ENCODE measurements at regions of chr10 and their contacts with region 1.

Region 1: DNA sequence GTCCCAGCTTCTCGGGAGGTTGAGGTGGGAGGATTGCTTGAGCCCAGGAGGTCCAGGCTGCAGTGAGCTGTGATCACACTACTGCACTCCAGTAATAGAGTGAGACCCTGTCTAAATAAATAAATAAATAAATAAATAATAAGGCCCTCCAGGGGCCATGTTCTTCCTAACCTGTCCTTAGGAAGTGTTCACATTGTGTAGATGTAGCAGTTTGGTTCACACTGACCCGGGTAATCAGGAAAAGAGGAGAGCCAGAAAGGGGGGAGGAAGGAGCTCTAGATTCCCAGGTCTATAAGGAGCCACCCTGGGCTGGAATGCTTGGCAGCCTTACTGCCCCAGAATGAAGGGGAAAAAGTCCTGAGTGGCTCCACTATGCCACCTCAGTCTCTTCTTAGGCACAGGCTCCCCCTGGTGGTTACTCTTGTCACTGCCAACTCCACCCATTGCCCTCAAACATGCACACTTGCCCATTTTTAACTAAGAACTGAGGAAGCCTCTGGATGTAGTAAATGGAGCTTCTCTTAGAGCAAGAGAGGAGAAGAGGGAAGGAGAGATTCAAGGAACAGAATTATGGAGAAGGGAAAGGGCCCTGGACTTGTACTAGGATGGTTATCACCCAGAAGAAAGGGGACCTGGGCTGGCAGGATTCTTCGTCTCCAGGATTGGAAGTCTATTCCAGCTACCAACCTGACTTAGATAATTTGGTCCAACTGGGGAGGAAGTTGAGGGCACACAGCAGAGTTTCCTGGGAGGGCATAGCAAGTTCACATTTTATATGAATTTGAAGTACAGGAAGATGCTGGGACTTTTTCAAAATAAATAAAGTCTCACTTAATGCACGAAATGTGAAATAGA is 7.8 kb downstream of the HPS6 start:
- DNase-seq: peak; percentile 77 to 83
- ATAC-seq: peak; percentile 88 to 94 (median 90)
- H3K4me3 ChIP-seq: no peak overlapping the region
- H3K27ac ChIP-seq: no peak overlapping the region
- H3K4me1 ChIP-seq: peaks cover 3% of the 10 kb centered on the region
- H3K27me3 ChIP-seq: no peaks in the 10 kb centered on the region
- CTCF ChIP-seq: peak; percentile 92

Region 2: GRCh38 chr10:101840741-101841453 is 232.0 kb before region 1 on chr10:
- intact Hi-C with region 1: loop called (anchors 2 to 5 kb)
- DNase-seq: peak; percentile 81 to 87
- ATAC-seq: peak; percentile 86 to 92 (median 87)
- H3K4me3 ChIP-seq: peak overlapping the region; percentile 53
- H3K27ac ChIP-seq: no peak overlapping the region
- H3K4me1 ChIP-seq: peaks cover 24% of the 10 kb centered on the region
- H3K27me3 ChIP-seq: no peaks in the 10 kb centered on the region
- CTCF ChIP-seq: peak; percentile 86

Region 3: DNA sequence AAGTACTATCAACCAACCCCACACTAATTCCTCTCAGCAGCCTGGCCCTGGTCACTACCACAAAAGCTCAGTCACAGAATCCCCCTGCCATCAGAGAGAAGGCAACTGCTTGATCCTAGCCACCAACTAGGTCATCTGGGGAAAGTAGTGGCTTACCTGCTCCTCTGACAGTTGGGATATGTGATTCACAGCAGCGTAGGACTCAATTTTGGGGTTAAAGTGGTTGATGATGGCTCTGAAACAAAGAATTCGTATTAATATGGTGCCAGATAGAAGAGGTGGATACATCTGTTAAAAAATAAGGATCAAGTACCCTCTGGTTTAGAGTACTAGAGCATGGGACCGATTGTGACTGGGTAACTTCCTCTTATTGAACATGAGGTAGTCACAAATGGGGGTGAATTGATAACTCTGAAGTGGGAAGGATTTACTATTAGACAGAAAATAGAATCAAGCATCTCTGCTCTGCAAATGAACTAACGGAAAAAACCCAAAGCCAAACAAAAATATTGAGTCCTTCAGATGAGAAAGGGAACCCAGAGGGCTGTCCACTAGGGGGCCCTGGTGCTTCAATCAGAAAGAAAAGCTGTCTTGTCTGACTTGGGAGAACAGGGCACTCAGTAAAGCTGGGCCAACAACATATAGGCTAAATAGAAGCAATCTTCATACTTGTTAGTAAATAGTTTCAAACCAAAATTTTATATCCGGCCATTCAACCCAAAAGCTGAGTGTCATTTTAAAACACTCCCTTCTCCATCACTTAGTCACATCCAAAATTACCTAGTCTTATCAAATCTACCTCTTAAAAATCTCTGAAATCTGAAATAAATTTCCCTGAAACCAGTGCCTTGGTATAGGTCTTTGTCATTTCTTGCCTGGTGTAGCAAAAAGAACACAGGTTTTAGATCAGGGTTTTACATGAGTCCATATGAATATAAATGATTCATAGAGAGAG is 183.4 kb before region 1 on chr10:
- intact Hi-C with region 1: loop called in 1 of 2 experiments (anchors 10 kb)
- DNase-seq: peak; percentile 67 to 79
- ATAC-seq: peak; percentile 58 to 85 (median 78)
- H3K4me3 ChIP-seq: no peak overlapping the region
- H3K27ac ChIP-seq: no peak overlapping the region
- H3K4me1 ChIP-seq: peaks cover 9% of the 10 kb centered on the region
- H3K27me3 ChIP-seq: no peaks in the 10 kb centered on the region
- CTCF ChIP-seq: peak; percentile 75

Region 4: GRCh38 chr10:102009801-102010425 is 63.0 kb before region 1 on chr10:
- intact Hi-C with region 1: loop called in 1 of 2 experiments (anchors 5 kb)
- DNase-seq: no peak
- ATAC-seq: peak; percentile 97 to 99 (median 98)
- H3K4me3 ChIP-seq: no peak overlapping the region
- H3K27ac ChIP-seq: no peak overlapping the region
- H3K4me1 ChIP-seq: peaks cover 5% of the 10 kb centered on the region
- H3K27me3 ChIP-seq: no peaks in the 10 kb centered on the region
- CTCF ChIP-seq: peak; percentile 91

Region 5: DNA sequence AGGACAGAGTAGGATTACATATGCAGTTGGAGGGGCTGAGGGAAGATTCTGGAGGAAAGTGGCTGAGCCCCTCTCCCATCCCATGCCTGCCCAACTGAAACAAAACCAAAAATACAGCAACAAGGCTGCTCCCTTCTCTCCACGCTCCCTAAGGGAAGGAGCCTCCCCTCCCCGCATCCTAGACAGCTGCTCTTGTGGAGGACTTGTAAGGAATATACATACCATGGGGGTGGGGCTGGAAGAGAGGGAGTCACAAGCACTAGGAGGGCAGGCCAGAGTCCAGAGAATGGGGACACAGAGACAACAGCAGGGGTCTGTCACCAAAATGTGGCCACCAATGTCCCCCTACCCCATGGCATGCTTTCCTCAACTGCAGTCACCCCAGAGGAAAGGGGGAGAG is 34.1 kb after region 1 on chr10:
- intact Hi-C with region 1: loop called in 1 of 2 experiments (anchors 5 kb)
- DNase-seq: no peak
- ATAC-seq: no peak
- H3K4me3 ChIP-seq: no peak overlapping the region
- H3K27ac ChIP-seq: no peak overlapping the region
- H3K4me1 ChIP-seq: no peaks in the 10 kb centered on the region
- H3K27me3 ChIP-seq: no peaks in the 10 kb centered on the region
- CTCF ChIP-seq: no peak

Region 6: DNA sequence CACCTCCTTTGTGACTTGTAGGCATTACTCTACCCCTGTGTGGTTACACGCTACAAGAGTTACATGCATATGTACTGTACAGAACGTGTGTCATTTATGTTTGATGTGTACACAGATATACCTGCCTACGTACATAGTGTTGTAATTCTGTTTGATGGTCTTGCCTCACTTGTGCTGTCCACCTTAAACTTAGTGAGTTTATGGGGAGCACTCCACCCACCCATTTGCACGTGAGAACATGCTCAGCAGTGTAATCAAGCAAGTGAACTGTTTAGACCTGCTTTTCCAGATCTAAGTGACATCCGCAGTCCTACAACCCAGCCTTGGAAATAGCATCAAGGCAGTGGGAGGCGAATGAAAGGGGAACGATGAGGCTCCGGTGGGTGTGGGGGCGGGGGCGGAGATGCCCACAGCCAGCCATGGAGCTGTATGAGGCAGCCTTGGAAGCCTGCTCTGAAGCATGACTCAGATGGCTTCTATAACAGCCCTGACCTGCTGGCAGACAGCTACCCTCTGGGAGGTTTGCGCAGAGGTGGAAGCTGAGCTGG is 483.0 kb after region 1 on chr10:
- intact Hi-C with region 1: no loop called
- DNase-seq: peak; percentile 58 to 81
- ATAC-seq: peak; percentile 97 to 99 (median 98)
- H3K4me3 ChIP-seq: peak overlapping the region; percentile 17
- H3K27ac ChIP-seq: peak overlapping the region; percentile 63
- H3K4me1 ChIP-seq: peaks cover 25% of the 10 kb centered on the region
- H3K27me3 ChIP-seq: no peaks in the 10 kb centered on the region
- CTCF ChIP-seq: no peak